ENCODE measurements at regions of chr17 and their contacts with region 1.

Region 1: GRCh38 chr17:14300575-14301278 is at the start of gene HS3ST3B1:
- DNase-seq: peak; percentile 99 to 100 (median 99)
- H3K4me3 ChIP-seq: peak within 1 kb of the TSS; percentile 89 to 96
- H3K4me3 Mint-ChIP-seq: peak within 1 kb of the TSS; percentile 90 to 99 (median 98)
- H3K27ac ChIP-seq: peak within 1 kb of the TSS; percentile 61
- H3K27ac Mint-ChIP-seq: peak within 1 kb of the TSS; percentile 81 to 98 (median 93)
- H3K4me1 ChIP-seq: peaks cover 67% of the 10 kb centered on the region
- H3K4me1 Mint-ChIP-seq: peaks cover 45 to 80% (median 57%) of the 10 kb centered on the region in 4 donors
- H3K27me3 ChIP-seq: peaks cover 16% of the 10 kb centered on the region
- H3K27me3 Mint-ChIP-seq: peaks cover 16 to 29% of the 10 kb centered on the region in 2 donors
- total RNA-seq, gene HS3ST3B1: 38.8 to 40.5 TPM

Region 2: GRCh38 chr17:13017659-13018459 is 1282.9 kb before region 1 on chr17 and contains the start of gene ELAC2:
- CTCF ChIA-PET with region 1: interaction called, 4 read pairs
- POLR2A ChIA-PET with region 1: interaction called, 18 read pairs
- intact Hi-C with region 1: loop called (anchors 2 kb)
- DNase-seq: peak; percentile 96 to 98 (median 96)
- H3K4me3 ChIP-seq: peak within 1 kb of the TSS; percentile 77 to 94
- H3K4me3 Mint-ChIP-seq: peak within 1 kb of the TSS; percentile 95 to 100 (median 98)
- H3K27ac ChIP-seq: peak within 1 kb of the TSS; percentile 73
- H3K27ac Mint-ChIP-seq: peak within 1 kb of the TSS; percentile 94 to 98 (median 97)
- H3K4me1 ChIP-seq: peaks cover 18% of the 10 kb centered on the region
- H3K4me1 Mint-ChIP-seq: peaks cover 15 to 44% (median 32%) of the 10 kb centered on the region in 4 donors
- H3K27me3 ChIP-seq: no peaks in the 10 kb centered on the region
- H3K27me3 Mint-ChIP-seq: no peaks in the 10 kb centered on the region
- total RNA-seq, gene ELAC2: 65.8 to 73.2 TPM

Region 3: DNA sequence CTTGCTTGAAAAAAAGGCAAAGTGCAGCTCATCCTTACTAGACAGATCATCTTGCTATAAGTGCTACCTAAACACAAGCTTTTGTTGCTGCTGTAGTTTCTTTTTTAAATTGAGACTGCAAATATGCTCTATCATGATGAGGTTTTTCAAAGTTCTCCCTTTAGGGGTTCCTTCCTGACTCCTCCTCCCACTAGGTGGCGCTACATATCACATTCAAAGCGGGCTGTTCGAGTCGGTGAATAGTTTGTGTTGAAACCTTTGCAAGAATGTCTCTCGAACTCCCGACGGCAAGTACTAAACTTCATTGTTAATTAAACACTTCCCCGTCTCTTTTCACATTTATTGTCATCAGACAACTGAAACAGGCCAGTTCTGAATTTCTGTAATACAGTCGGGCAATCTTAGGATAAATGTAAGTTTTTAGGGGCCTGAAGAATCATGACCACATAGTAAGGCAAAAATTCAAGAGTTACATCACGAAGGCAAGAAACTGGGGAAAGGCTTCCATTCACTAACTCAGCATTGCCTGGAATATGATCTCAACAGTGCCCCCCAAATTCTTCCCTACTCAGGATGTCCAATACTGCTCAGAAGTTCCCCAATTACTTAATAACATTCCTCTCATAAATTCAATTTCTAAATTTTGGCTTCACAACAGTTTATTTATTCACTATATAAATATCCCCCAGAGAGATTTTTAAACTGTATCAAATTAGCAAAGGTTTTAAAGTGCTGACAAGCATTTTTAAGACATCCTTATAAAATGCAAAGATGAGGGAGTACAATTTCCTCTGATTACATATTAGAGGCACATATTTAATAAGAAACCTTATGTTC is 705.7 kb before region 1 on chr17:
- CTCF ChIA-PET with region 1: interaction called, 85 read pairs
- POLR2A ChIA-PET with region 1: interaction called, 9 read pairs
- intact Hi-C with region 1: loop called (anchors 1 kb)
- DNase-seq: peak; percentile 76 to 84 (median 80)
- H3K4me3 ChIP-seq: no peak overlapping the region
- H3K4me3 Mint-ChIP-seq: no peak overlapping the region
- H3K27ac ChIP-seq: no peak overlapping the region
- H3K27ac Mint-ChIP-seq: no peak overlapping the region
- H3K4me1 ChIP-seq: no peaks in the 10 kb centered on the region
- H3K4me1 Mint-ChIP-seq: peaks cover 3 to 9% (median 6%) of the 10 kb centered on the region in 4 donors
- H3K27me3 ChIP-seq: peaks cover 21% of the 10 kb centered on the region
- H3K27me3 Mint-ChIP-seq: peaks cover 13 to 17% of the 10 kb centered on the region in 2 donors

Region 4: DNA sequence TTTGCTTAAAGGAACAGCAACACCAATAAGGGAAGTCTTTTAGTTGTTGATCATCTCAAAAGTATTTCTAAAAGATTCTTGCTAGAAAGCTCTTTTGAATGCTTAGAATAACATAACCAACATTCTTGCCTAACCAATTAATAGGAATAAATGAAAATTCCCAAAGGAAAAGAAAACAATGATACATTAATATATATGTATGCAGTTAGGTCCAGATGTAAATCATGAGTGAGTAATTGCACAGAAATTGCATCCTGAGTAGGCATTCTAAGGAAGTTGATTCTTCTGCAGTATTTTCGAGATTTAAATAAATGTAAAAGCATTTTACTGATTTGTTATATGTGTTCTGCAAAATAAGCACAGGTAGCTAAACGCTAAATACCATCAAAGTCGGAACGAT is 209.4 kb before region 1 on chr17:
- CTCF ChIA-PET with region 1: interaction called, 13 read pairs
- POLR2A ChIA-PET with region 1: no interaction called
- intact Hi-C with region 1: no loop called
- DNase-seq: no peak
- H3K4me3 ChIP-seq: no peak overlapping the region
- H3K4me3 Mint-ChIP-seq: peak overlapping the region in 1 of 8 donors; percentile 23
- H3K27ac ChIP-seq: no peak overlapping the region
- H3K27ac Mint-ChIP-seq: no peak overlapping the region
- H3K4me1 ChIP-seq: peaks cover 29% of the 10 kb centered on the region
- H3K4me1 Mint-ChIP-seq: peaks cover 35 to 81% (median 54%) of the 10 kb centered on the region in 4 donors
- H3K27me3 ChIP-seq: no peaks in the 10 kb centered on the region
- H3K27me3 Mint-ChIP-seq: no peaks in the 10 kb centered on the region

Region 5: DNA sequence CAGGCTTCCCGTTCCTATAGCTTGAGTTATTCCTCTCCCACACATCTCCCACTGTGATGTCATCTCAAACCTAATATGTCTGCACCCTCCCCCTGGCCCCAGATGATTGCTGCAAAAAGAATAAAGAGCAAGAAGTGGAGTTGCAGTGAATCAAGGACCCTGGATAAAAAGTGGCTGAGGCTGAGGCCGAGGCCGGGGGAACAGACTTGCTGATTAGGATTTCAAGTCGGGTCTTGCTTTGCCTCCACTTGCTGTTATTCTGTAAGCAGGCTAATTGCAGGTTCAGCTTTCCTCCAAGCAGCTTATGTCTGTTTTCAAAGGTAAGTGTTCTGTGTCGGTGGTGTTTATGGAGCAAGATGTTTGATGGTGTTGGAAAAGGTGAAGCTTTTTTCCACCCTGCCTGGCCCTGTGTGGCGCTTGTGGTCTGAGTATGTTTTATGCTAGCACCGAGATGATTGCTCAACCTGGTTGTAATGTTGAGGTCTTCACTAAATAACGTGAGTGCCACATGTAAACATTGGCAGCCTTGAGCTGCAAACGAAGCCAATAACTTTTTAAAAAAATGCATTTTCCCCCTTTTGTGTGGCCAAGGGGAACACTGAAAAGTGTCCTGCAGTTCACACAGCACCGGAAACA is 15.5 kb after region 1 on chr17:
- CTCF ChIA-PET with region 1: interaction called, 21 read pairs
- POLR2A ChIA-PET with region 1: interaction called, 21 read pairs
- intact Hi-C with region 1: no loop called
- DNase-seq: no peak
- H3K4me3 ChIP-seq: no peak overlapping the region
- H3K4me3 Mint-ChIP-seq: peak overlapping the region in 6 of 8 donors; percentile 9 to 70 (median 46)
- H3K27ac ChIP-seq: no peak overlapping the region
- H3K27ac Mint-ChIP-seq: peak overlapping the region; percentile 2 to 79 (median 58)
- H3K4me1 ChIP-seq: peaks cover 72% of the 10 kb centered on the region
- H3K4me1 Mint-ChIP-seq: peaks cover 71 to 94% (median 83%) of the 10 kb centered on the region in 4 donors
- H3K27me3 ChIP-seq: no peaks in the 10 kb centered on the region
- H3K27me3 Mint-ChIP-seq: no peaks in the 10 kb centered on the region

Region 6: GRCh38 chr17:14427900-14428647 is 127.3 kb after region 1 on chr17:
- CTCF ChIA-PET with region 1: interaction called, 26 read pairs
- POLR2A ChIA-PET with region 1: interaction called, 80 read pairs
- intact Hi-C with region 1: loop called (anchors 1 kb)
- DNase-seq: peak; percentile 65 to 73 (median 69)
- H3K4me3 ChIP-seq: peak overlapping the region in 1 of 2 donors; percentile 39
- H3K4me3 Mint-ChIP-seq: peak overlapping the region; percentile 79 to 93 (median 86)
- H3K27ac ChIP-seq: peak overlapping the region; percentile 45
- H3K27ac Mint-ChIP-seq: peak overlapping the region; percentile 54 to 92 (median 88)
- H3K4me1 ChIP-seq: peaks cover 51% of the 10 kb centered on the region
- H3K4me1 Mint-ChIP-seq: peaks cover 48 to 62% (median 57%) of the 10 kb centered on the region in 4 donors
- H3K27me3 ChIP-seq: no peaks in the 10 kb centered on the region
- H3K27me3 Mint-ChIP-seq: no peaks in the 10 kb centered on the region

Region 7: GRCh38 chr17:14926526-14927122 is 625.9 kb after region 1 on chr17:
- CTCF ChIA-PET with region 1: interaction called, 4 read pairs
- POLR2A ChIA-PET with region 1: no interaction called
- intact Hi-C with region 1: loop called (anchors 1 kb)
- DNase-seq: peak; percentile 48 to 55 (median 52)
- H3K4me3 ChIP-seq: no peak overlapping the region
- H3K4me3 Mint-ChIP-seq: no peak overlapping the region
- H3K27ac ChIP-seq: no peak overlapping the region
- H3K27ac Mint-ChIP-seq: no peak overlapping the region
- H3K4me1 ChIP-seq: no peaks in the 10 kb centered on the region
- H3K4me1 Mint-ChIP-seq: no peaks in the 10 kb centered on the region
- H3K27me3 ChIP-seq: no peaks in the 10 kb centered on the region
- H3K27me3 Mint-ChIP-seq: peaks cover 6 to 7% of the 10 kb centered on the region in 2 donors

Measured in CD4-positive, alpha-beta memory T cell (primary cell).